Heart right ventricle (tissue), 16 donors: ENCODE measurements at regions of chr9 and their contacts with region 1.

Region 1: DNA sequence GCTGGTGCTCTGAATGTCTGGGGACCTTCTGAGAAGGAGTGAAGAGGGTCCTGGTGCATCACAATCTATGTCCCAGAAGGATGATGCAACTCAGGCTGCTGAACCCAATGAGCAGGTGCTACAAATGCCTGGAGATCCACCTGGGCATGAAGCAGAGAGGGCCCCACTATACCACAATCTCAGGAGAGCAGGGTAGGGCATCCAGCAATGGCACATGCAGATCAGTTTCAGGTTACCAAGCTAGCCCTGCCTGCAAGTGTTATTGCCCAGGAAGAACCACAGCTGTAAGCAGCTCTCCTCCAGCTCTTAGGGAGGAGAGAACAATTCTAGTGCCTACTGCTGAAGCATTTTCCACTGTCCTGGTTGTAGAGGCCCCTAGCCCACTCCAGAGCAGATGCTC is 389.2 kb upstream of the TNC start:
- DNase-seq: no peak
- ATAC-seq: no peak
- H3K4me3 ChIP-seq: no peak overlapping the region
- H3K27ac ChIP-seq: no peak overlapping the region
- H3K4me1 ChIP-seq: no peaks in the 10 kb centered on the region
- H3K27me3 ChIP-seq: no peaks in the 10 kb centered on the region
- CTCF ChIP-seq: no peak

Region 2: GRCh38 chr9:115442054-115442453 is 65.1 kb before region 1 on chr9:
- intact Hi-C with region 1: loop called in 1 of 10 experiments (anchors 10 kb)
- DNase-seq: no peak
- ATAC-seq: peak in 7 of 8 donors; percentile 38 to 85 (median 59)
- H3K4me3 ChIP-seq: no peak overlapping the region
- H3K27ac ChIP-seq: peak overlapping the region in 2 of 10 donors; percentile 0 to 53
- H3K4me1 ChIP-seq: peaks cover 0 to 11% (median 0%) of the 10 kb centered on the region in 9 donors
- H3K27me3 ChIP-seq: no peaks in the 10 kb centered on the region
- CTCF ChIP-seq: no peak